Activated B cell treated with CpG ODN at 0.5 μM for 24 hours (primary cell): ENCODE measurements at regions of chr15 and their contacts with region 1.

Region 1: DNA sequence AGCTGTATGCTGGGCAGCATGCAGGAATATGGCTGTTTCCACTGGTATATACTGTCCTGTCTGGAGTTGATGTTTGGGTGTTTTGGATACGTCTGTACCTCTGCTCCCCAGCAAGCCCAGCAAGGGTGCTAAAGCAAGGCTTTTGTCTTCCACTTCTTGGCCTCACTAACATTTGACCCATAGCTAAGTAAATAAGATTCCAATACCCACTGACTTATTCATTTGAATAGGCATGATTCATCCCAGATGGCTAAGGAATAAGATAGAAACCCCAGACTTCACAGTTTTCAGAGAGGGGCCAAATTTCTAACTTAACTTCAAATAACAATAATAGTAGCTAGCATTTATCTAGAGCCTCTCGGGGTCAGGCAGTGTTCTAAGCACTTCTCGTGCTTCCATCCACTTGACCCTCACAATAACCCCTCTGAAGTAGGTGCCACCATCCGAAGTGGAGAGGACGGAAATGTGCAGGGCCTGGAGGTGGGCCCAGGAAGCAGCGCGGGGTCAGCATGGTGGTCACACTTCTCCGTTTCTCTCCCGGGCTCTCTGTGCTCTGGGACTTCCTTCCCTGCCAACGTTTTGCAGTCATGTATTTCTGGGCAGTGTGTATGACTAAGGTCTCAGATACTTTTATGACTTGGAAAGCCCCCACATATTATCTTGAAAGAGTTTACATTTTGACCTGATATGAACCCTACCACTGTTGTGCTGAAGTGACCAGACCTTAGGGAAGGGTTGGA is 39.3 kb downstream of the LRRK1 start:
- DNase-seq: no peak
- ATAC-seq: no peak
- H3K4me3 Mint-ChIP-seq: no peak overlapping the region
- H3K27ac Mint-ChIP-seq: no peak overlapping the region
- H3K4me1 Mint-ChIP-seq: peaks cover 30% of the 10 kb centered on the region
- H3K27me3 Mint-ChIP-seq: no peaks in the 10 kb centered on the region
- CTCF ChIP-seq: no peak

Region 2: DNA sequence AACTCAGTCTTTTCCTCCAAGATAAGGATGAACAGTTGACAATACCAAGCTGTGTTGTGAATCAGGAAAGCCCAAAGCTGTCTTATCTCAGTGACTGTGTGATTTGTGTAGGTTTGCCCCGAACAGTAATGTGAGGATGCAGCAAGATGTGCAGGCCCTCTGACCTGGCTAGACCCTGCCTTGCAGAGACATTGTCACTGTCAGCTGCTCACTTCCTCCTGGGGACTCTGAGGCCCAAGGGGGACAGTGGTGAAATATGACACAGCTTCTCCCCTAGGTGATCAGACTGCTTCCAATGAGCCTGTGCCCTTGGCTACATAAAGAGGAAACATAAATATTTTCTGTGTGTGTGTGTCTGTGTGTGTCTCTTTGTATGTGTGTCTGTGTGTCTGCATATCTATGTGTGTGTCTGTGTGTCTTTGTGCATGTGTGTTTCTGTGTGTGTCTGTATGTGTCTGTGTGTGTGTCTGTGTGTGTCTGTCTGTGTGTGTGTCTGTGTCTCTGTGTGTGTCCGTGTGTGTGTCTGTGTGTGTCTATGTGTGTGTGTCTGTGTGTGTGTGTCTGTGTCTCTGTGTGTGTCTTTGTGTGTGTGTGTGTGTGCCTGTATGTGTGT is 17.6 kb before region 1 on chr15:
- CTCF ChIA-PET with region 1: no interaction called
- POLR2A ChIA-PET with region 1: no interaction called
- intact Hi-C with region 1: loop called (anchors 2 kb)
- DNase-seq: no peak
- ATAC-seq: peak; percentile 87
- H3K4me3 Mint-ChIP-seq: no peak overlapping the region
- H3K27ac Mint-ChIP-seq: no peak overlapping the region
- H3K4me1 Mint-ChIP-seq: peaks cover 25% of the 10 kb centered on the region
- H3K27me3 Mint-ChIP-seq: no peaks in the 10 kb centered on the region
- CTCF ChIP-seq: no peak